GM12878 (cell line): ENCODE measurements at regions of chr2 and their contacts with region 1.

Region 1: GRCh38 chr2:101823347-101823791 is 125.9 kb downstream of the MAP4K4 start:
- DNase-seq: no peak
- ATAC-seq: peak; percentile 90
- H3K4me3 ChIP-seq: no peak overlapping the region
- H3K27ac ChIP-seq: no peak overlapping the region
- H3K4me1 ChIP-seq: no peaks in the 10 kb centered on the region
- H3K27me3 ChIP-seq: no peaks in the 10 kb centered on the region
- CTCF ChIP-seq: peak; percentile 78 to 82 (median 79)
- EP300 ChIP-seq: no peak
- POLR2A ChIP-seq: no peak
- RAD21 ChIP-seq: peak; percentile 71

Region 2: GRCh38 chr2:101341901-101342624 is 481.3 kb before region 1 on chr2:
- CTCF ChIA-PET with region 1: interaction called, 32 read pairs
- POLR2A ChIA-PET with region 1: no interaction called
- RAD21 ChIA-PET with region 1: interaction called, 3 read pairs
- SMC1A ChIA-PET with region 1: no interaction called
- in situ Hi-C with region 1: loop called (anchors 10 kb)
- intact Hi-C with region 1: no loop called
- DNase-seq: no peak
- ATAC-seq: peak; percentile 83
- H3K4me3 ChIP-seq: no peak overlapping the region
- H3K27ac ChIP-seq: no peak overlapping the region
- H3K4me1 ChIP-seq: no peaks in the 10 kb centered on the region
- H3K27me3 ChIP-seq: no peaks in the 10 kb centered on the region; a peak in 1 of 4 replicates
- CTCF ChIP-seq: peak; percentile 78 to 88 (median 82)
- EP300 ChIP-seq: no peak
- POLR2A ChIP-seq: no peak
- RAD21 ChIP-seq: peak; percentile 71

Region 3: DNA sequence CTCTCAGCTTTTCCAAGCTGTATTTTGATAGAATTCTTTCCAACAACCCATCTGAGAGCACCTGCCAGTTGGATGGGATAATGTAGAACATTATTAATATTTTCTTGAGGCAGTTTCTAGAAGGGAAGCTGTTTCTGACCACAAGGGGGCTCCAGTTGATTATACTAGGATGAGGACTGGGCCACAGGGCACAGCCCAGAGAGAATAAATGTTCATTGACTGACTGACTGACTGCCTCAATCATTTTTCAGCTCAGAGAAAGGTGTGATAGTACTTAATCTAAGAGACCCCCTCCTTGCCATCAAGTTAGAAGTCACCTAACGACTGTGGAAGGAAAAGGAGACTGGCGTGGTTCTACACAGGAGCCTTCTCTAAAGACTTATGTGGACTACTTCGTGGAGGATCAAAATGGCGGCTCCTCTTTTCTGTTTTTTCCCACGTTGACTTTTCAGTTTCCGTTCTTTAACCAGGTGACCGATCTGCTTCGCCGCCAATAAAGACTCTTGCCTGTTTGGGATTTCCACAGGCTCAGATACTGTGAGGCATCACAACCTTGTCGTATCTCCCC is 404.2 kb before region 1 on chr2:
- CTCF ChIA-PET with region 1: interaction called, 22 read pairs
- POLR2A ChIA-PET with region 1: no interaction called
- RAD21 ChIA-PET with region 1: interaction called, 6 read pairs
- SMC1A ChIA-PET with region 1: interaction called, 5 read pairs
- in situ Hi-C with region 1: no loop called
- intact Hi-C with region 1: no loop called
- DNase-seq: no peak
- ATAC-seq: peak; percentile 94
- H3K4me3 ChIP-seq: no peak overlapping the region
- H3K27ac ChIP-seq: no peak overlapping the region
- H3K4me1 ChIP-seq: no peaks in the 10 kb centered on the region
- H3K27me3 ChIP-seq: no peaks in the 10 kb centered on the region; a peak in 2 of 4 replicates
- CTCF ChIP-seq: peak; percentile 65 to 70 (median 65)
- EP300 ChIP-seq: no peak
- POLR2A ChIP-seq: no peak
- RAD21 ChIP-seq: peak; percentile 81

Region 4: DNA sequence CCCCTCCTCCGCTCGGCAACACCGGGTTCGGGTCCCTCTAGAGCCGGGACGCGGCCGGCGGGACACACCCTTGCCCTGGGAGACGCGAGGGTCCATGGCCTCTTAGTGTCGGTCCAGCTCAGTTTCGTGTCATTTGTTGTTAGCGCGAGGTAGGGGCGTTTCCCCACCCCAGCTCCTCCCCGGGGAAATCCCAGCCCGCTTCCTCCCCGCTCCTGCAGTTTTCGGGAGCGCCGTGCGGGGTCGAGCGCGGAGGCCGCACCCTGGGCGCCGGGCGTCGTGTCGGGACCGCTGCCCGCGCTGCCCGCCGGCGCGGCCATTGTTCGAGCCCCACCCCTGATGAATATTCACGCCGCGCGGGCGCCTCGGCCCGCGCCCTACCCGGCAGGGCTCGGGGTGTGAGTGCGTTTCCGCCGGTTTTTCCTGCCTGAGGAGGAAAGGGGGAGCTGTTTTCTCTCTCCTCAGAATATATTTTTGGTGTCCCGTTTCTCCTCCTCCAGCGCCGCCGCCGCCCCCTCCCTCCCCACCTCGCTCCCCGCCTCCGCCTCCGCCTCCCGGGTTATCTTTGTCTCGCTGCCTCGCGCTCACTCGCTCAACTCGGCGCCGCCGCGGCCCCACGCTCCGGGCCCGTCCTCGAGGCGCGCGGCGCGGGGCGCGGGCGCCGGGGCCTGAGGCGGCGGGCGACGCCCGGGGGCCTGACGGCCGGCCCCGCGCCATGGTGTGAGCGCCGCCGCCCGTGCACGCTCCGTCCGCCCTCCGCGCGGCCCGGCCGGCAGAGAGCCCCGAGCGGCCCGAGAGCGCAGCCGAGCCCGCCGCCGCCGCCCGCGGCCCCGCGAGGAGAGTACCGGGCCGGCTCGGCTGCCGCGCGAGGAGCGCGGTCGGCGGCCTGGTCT is 126.0 kb before region 1 on chr2 and contains the start of gene MAP4K4:
- CTCF ChIA-PET with region 1: interaction called, 4 read pairs
- POLR2A ChIA-PET with region 1: no interaction called
- RAD21 ChIA-PET with region 1: interaction called, 9 read pairs
- SMC1A ChIA-PET with region 1: interaction called, 20 read pairs
- in situ Hi-C with region 1: no loop called
- intact Hi-C with region 1: no loop called
- DNase-seq: no peak
- ATAC-seq: peak; percentile 68
- H3K4me3 ChIP-seq: peak within 1 kb of the TSS; percentile 49
- H3K27ac ChIP-seq: no peak within 1 kb of the TSS
- H3K4me1 ChIP-seq: no peaks in the 10 kb centered on the region; the same call in 1 of the 2 replicates
- H3K27me3 ChIP-seq: peaks cover 2 to 22% of the 10 kb centered on the region in 2 experiments; a peak in 3 of 4 replicates
- CTCF ChIP-seq: peak in 1 of 3 experiments; percentile 10; a peak in 1 of 6 replicates
- EP300 ChIP-seq: no peak
- POLR2A ChIP-seq: 0 out of 2 replicates have a peak, but pooled peaks have one; percentile 24
- RAD21 ChIP-seq: no peak
- polyA plus RNA-seq, gene MAP4K4: 1.9 to 2.5 TPM

Region 5: GRCh38 chr2:101781326-101781725 is 42.0 kb before region 1 on chr2:
- CTCF ChIA-PET with region 1: interaction called, 20 read pairs
- POLR2A ChIA-PET with region 1: no interaction called
- RAD21 ChIA-PET with region 1: interaction called, 4 read pairs
- SMC1A ChIA-PET with region 1: interaction called, 8 read pairs
- in situ Hi-C with region 1: no loop called
- intact Hi-C with region 1: no loop called
- DNase-seq: no peak
- ATAC-seq: peak; percentile 75
- H3K4me3 ChIP-seq: no peak overlapping the region
- H3K27ac ChIP-seq: no peak overlapping the region
- H3K4me1 ChIP-seq: no peaks in the 10 kb centered on the region
- H3K27me3 ChIP-seq: peaks cover 0 to 4% of the 10 kb centered on the region in 2 experiments; a peak in 1 of 4 replicates
- CTCF ChIP-seq: no peak
- EP300 ChIP-seq: no peak
- POLR2A ChIP-seq: no peak
- RAD21 ChIP-seq: no peak

Region 6: DNA sequence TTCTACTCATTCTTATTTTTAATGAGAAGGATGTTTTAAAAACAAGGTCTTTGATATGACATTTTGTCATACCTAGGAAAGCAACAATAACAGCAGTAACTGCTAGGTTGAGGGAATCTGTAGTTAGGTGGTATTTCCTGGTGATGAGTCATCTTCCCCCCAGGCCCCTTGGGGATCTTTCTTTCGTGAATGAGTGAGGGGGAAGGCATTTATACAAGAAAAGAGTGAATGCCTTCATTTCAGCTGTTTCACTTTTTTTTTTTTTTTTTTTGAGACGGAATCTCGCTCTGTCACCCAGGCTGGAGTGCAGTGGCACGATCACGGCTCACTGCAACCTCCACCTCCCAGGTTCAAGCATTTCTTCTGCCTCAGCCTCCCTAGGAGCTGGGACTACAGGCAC is 17.2 kb before region 1 on chr2:
- CTCF ChIA-PET with region 1: interaction called, 7 read pairs
- POLR2A ChIA-PET with region 1: no interaction called
- RAD21 ChIA-PET with region 1: no interaction called
- SMC1A ChIA-PET with region 1: interaction called, 7 read pairs
- in situ Hi-C with region 1: no loop called
- intact Hi-C with region 1: loop called (anchors 2 kb)
- DNase-seq: no peak
- ATAC-seq: peak; percentile 75
- H3K4me3 ChIP-seq: no peak overlapping the region
- H3K27ac ChIP-seq: no peak overlapping the region
- H3K4me1 ChIP-seq: 0 out of 2 replicates have a peak, but pooled peaks cover 2% of the 10 kb centered on the region
- H3K27me3 ChIP-seq: no peaks in the 10 kb centered on the region
- CTCF ChIP-seq: no peak
- EP300 ChIP-seq: no peak
- POLR2A ChIP-seq: no peak
- RAD21 ChIP-seq: no peak

Region 7: DNA sequence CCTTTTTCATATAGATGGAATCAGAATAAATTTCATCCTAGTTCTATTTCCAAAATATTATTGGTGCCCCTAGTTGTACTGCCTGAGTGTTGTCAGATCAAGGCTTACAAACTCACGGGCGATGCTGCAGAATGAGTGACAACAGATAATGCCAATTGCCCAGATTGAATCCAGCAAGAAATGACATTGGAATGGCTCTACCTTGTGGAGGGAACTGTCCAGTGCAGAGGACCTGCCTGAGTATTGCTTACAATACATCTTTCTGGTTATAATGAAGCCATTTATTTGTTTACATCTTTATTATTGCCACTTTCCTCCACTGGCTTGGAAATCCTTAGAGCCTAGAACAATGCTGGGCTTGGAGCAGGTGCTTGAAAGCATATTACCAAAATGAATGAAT is 160.6 kb after region 1 on chr2:
- CTCF ChIA-PET with region 1: no interaction called
- POLR2A ChIA-PET with region 1: no interaction called
- RAD21 ChIA-PET with region 1: no interaction called
- SMC1A ChIA-PET with region 1: no interaction called
- in situ Hi-C with region 1: no loop called
- intact Hi-C with region 1: no loop called
- DNase-seq: no peak
- ATAC-seq: peak; percentile 28; the same call in 1 of the 3 replicates
- H3K4me3 ChIP-seq: no peak overlapping the region
- H3K27ac ChIP-seq: no peak overlapping the region
- H3K4me1 ChIP-seq: no peaks in the 10 kb centered on the region
- H3K27me3 ChIP-seq: no peaks in the 10 kb centered on the region
- CTCF ChIP-seq: peak in 2 of 3 experiments; percentile 13 to 32; a peak in 4 of 6 replicates
- EP300 ChIP-seq: no peak
- POLR2A ChIP-seq: no peak
- RAD21 ChIP-seq: peak; percentile 25; the same call in 1 of the 2 replicates

Region 8: GRCh38 chr2:101998896-101999789 is 175.8 kb after region 1 on chr2:
- CTCF ChIA-PET with region 1: interaction called, 15 read pairs
- POLR2A ChIA-PET with region 1: no interaction called
- RAD21 ChIA-PET with region 1: no interaction called
- SMC1A ChIA-PET with region 1: no interaction called
- in situ Hi-C with region 1: no loop called
- intact Hi-C with region 1: no loop called
- DNase-seq: no peak
- ATAC-seq: peak; percentile 71
- H3K4me3 ChIP-seq: no peak overlapping the region
- H3K27ac ChIP-seq: peak overlapping the region; percentile 50; the same call in 1 of the 2 replicates
- H3K4me1 ChIP-seq: peaks cover 6% of the 10 kb centered on the region
- H3K27me3 ChIP-seq: no peaks in the 10 kb centered on the region; a peak in 2 of 4 replicates
- CTCF ChIP-seq: no peak; a peak in 1 of 6 replicates
- EP300 ChIP-seq: 0 out of 4 replicates have a peak, but pooled peaks of 1 of the 2 experiments have one; percentile 13
- POLR2A ChIP-seq: no peak
- RAD21 ChIP-seq: no peak